Activated CD4-positive, alpha-beta memory T cell treated with anti-CD3 and anti-CD28 coated beads, Interleukin-2, amount 10 ng/mL, durations not matched to agents 7 days and 5 days (primary cell): ENCODE measurements at regions of chr19 and their contacts with region 1.

Region 1: GRCh38 chr19:42596391-42597072 is 1.8 kb upstream of the CEACAM8 start:
- DNase-seq: peak; percentile 41
- H3K4me3 Mint-ChIP-seq: no peak overlapping the region
- H3K27ac Mint-ChIP-seq: no peak overlapping the region
- H3K4me1 Mint-ChIP-seq: no peaks in the 10 kb centered on the region
- H3K27me3 Mint-ChIP-seq: peaks cover 27% of the 10 kb centered on the region

Region 2: DNA sequence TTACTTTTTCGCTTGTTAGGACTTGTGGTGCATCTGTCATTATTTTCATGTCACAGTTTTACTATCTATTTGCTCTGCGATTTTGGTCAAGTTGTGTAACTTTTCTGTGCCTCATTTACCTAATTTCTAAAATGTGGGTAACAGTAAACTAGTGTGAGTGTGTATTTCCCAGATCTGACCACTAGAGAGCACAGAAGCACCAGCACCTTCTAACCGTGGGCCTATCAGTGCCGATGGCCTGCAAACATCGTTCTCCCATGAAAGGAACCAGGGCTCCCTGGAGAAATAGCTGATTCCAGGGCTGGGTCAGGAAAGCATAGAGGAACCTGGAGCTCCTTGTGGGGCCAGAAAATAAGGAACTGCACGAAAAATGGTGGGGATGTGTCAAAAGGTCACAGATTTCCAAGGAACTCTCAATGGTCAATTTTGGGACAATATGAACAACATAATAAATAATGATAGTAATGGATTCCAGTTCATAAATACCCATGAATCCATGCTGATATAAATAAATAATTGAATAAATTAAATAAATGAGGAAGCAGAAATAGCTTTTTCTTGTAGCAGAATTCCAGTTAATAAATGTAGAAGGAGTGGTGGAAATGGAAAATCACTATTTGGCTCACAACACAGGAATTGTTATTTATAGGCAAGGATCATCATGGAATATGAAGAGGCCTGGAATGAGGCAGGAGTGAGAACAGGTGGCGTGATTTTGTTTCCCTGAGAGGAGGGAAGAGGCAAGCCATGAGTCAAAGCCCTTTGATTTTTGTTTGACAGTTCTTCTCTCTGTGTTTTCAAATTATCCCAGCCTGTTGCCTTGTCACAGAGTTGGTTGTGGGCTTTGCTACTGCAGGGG is 33.0 kb before region 1 on chr19:
- CTCF ChIA-PET with region 1: interaction called, 20 read pairs
- POLR2A ChIA-PET with region 1: no interaction called
- DNase-seq: peak; percentile 24
- H3K4me3 Mint-ChIP-seq: no peak overlapping the region
- H3K27ac Mint-ChIP-seq: no peak overlapping the region
- H3K4me1 Mint-ChIP-seq: peaks cover 6% of the 10 kb centered on the region
- H3K27me3 Mint-ChIP-seq: peaks cover 13% of the 10 kb centered on the region

Region 3: DNA sequence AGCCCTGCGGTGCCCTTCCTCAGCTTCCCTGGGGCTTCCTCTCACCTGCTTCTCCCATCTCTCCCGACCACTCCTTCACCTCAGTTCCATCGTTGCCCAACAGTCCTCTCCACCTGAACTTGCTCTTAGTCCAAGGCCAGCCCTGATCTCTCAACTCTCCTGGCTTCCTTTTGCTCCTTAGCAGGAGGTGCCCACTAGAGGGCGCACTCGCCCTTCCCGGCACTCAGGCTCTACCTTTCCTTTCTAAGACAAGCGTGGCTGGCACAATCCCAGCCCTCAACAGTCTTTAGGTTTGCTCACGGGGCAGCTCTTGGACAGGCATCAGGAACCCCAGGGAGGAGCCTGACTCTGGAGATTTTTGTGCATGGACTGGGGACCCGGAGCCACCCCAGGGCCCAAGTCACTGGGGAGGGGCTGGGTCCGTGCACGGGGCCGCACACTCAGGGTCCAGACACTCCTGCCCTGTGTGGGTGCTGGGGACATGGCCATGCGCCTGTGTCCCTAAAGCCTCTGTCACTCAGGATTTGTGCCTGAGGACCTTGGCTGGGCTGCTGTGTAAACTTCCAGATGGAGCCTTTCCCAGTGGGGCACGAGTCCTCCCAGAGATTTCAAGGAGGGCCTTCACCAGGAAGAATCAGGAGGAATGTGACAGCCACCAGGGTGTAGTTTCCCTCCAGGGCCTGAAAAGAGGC is 10.3 kb after region 1 on chr19:
- CTCF ChIA-PET with region 1: interaction called, 12 read pairs
- POLR2A ChIA-PET with region 1: no interaction called
- DNase-seq: peak; percentile 62
- H3K4me3 Mint-ChIP-seq: no peak overlapping the region
- H3K27ac Mint-ChIP-seq: no peak overlapping the region
- H3K4me1 Mint-ChIP-seq: no peaks in the 10 kb centered on the region
- H3K27me3 Mint-ChIP-seq: peaks cover 18% of the 10 kb centered on the region

Region 4: DNA sequence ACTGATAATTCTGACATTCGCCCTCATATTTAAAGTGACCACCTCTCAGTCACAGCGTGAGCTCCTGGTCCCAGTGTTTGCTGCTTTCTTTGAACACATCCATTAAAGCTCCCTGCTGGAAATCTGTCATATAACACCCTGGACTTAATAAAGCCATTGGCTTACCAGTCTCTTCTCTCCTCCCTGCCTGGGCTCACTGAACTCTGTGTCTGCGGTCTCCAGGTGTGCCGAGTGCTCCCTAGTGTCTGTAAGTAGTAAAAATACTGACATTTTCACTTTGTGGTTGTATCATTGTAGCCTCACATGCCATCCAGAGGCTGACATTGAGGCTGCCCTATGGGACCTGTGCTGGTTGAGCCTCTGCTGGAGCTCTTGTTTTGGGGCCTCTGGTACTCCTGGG is 432.3 kb after region 1 on chr19:
- CTCF ChIA-PET with region 1: no interaction called
- POLR2A ChIA-PET with region 1: no interaction called
- DNase-seq: no peak
- H3K4me3 Mint-ChIP-seq: no peak overlapping the region
- H3K27ac Mint-ChIP-seq: no peak overlapping the region
- H3K4me1 Mint-ChIP-seq: no peaks in the 10 kb centered on the region
- H3K27me3 Mint-ChIP-seq: no peaks in the 10 kb centered on the region